Posterior cingulate gyrus (tissue), 11 donors: ENCODE measurements at regions of chr22 and their contacts with region 1.

Region 1: GRCh38 chr22:20562461-20563247 is 55.2 kb downstream of the MED15 start:
- DNase-seq: peak in 2 of 10 donors; percentile 37 to 56

Region 2: DNA sequence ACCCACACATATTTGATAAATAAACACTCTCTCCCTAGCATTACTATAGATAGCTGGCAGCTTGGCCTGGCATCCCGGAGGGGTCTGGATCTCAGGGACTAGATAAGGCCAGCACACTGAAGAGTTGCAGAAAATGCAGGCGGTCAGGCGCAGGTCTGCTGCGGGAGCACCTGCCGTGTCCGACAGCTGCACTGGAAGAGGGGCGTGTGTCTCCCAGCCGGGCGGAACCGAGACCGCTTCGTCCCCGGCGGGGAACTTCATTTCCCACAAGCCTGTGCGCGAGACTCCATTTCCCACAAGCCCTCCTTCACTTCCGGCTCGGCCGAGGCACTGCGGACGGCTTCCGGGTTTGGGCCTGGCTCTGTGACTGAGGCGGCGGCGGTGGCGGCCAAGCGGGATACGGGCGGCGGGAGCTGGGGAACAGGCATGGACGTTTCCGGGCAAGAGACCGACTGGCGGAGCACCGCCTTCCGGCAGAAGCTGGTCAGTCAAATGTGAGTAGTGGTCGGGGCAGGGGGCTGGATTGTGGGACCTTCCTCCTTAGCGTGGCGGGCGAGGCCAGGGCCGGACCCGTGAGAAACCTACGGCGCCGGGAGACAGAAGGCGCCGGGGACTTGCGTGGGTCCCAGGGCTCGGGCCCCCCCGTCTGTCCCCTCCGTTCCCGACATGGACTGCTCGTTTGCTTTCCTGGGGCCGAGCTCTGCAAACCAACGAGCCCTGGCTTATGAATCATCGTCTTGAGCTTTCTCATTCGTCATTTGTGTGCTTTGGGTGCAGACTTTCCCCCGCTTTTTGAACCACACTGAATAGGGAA is 55.2 kb before region 1 on chr22 and contains the start of gene MED15:
- intact Hi-C with region 1: loop called (anchors 5 kb)
- DNase-seq: peak; percentile 84 to 98 (median 91)

Region 3: GRCh38 chr22:20583471-20583922 is 20.8 kb after region 1 on chr22:
- intact Hi-C with region 1: no loop called
- DNase-seq: peak in 7 of 10 donors; percentile 30 to 93 (median 49)

Region 4: GRCh38 chr22:20636075-20636812 is 73.6 kb after region 1 on chr22:
- intact Hi-C with region 1: no loop called
- DNase-seq: peak in 1 of 10 donors; percentile 66

Region 5: DNA sequence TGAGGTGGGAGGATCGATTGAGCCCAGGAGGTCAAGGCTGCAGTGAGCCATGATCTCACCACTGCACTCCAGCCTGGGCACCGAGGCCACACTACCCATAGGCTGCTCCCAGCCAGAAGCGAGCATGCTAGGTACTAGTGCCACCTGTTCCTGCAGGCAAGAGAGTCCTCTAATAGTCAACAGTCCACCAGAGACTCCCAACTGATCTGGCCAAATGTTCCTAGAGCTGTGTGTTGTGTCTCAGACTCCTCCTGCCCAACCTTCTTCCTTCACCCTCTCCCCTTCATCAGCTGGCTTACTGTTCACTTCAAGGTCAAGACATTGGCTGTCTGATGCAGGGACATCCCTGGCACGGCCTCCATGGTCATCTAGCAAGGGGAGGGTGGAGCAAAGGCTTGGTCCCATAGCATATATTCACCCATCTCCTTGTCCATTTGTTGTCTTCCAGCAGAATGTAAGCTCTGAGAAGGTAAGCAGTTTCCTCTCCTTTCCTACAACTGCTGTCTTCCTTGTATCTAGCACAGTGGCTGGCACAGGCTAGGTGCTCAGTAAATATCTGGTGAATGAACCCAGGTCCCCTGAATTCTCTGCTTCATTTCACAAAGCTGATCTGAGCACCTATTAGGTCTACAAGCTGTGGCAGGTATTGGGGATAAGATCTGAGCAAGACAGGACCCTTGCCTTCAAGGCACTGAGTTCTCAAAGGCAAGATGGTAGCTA is 85.1 kb after region 1 on chr22:
- intact Hi-C with region 1: no loop called
- DNase-seq: no peak